ENCODE measurements at regions of chr11 and their contacts with region 1.

Region 1: GRCh38 chr11:64846998-64847666 is 2.7 kb upstream of the CDC42BPG start:
- DNase-seq: peak; percentile 79 to 97 (median 92)
- ATAC-seq: peak; percentile 60
- H3K4me3 ChIP-seq: no peak overlapping the region
- H3K4me3 Mint-ChIP-seq: no peak overlapping the region
- H3K27ac ChIP-seq: peak overlapping the region in 1 of 2 experiments; percentile 54
- H3K27ac Mint-ChIP-seq: peak overlapping the region; percentile 32
- H3K4me1 ChIP-seq: peaks cover 63% of the 10 kb centered on the region
- H3K4me1 Mint-ChIP-seq: peaks cover 60% of the 10 kb centered on the region
- H3K27me3 ChIP-seq: no peaks in the 10 kb centered on the region
- H3K27me3 Mint-ChIP-seq: no peaks in the 10 kb centered on the region
- CTCF ChIP-seq: peak; percentile 98

Region 2: GRCh38 chr11:64787526-64788320 is 59.4 kb before region 1 on chr11:
- CTCF ChIA-PET with region 1: interaction called, 6 read pairs
- POLR2A ChIA-PET with region 1: no interaction called
- intact Hi-C with region 1: loop called (anchors 2 to 5 kb)
- DNase-seq: peak in 7 of 9 experiments; percentile 42 to 75 (median 70)
- ATAC-seq: peak; percentile 84
- H3K4me3 ChIP-seq: no peak overlapping the region
- H3K4me3 Mint-ChIP-seq: no peak overlapping the region
- H3K27ac ChIP-seq: no peak overlapping the region
- H3K27ac Mint-ChIP-seq: peak overlapping the region; percentile 13
- H3K4me1 ChIP-seq: no peaks in the 10 kb centered on the region
- H3K4me1 Mint-ChIP-seq: peaks cover 8% of the 10 kb centered on the region
- H3K27me3 ChIP-seq: no peaks in the 10 kb centered on the region
- H3K27me3 Mint-ChIP-seq: no peaks in the 10 kb centered on the region
- CTCF ChIP-seq: peak; percentile 77

Region 3: DNA sequence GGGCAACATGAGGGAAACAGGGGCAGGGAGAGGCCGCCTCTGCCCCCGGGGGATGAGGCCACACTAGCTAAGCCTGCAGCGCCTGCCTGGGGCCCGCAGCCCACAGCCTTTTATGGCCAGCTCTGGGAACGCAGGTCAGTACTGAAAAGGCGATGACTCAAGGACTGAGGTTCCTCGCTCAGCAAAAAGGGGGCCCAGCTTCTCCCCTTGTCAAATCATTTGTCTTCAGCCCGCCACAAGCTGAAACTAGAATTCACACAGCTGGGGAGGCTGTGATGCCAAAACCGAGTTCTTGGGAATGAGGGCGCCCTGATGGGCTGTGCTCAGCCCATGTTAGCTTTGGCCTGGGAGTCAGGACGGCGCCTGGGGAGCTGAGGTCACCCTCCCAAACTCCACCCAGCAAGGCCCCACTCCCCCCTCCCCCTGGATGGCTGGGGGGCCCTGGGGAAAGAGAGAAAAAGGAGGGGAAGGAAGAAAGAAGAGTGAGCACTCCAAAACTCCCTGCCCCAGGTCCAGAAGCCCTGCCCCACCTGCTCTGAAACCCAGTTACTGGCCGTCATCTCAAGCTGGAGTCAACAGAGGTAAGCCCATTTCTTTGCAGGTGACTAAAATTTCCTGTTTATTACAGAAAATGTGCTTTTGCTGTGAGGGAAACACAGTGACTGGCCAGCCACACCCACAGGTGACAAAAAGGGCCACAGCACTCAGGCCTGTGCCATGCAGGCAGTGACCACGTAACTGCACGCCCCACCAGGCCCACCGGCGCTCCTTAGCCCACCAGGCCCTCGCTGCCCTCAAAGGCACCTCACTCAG is 17.5 kb after region 1 on chr11:
- CTCF ChIA-PET with region 1: interaction called, 397 read pairs
- POLR2A ChIA-PET with region 1: interaction called, 178 read pairs
- intact Hi-C with region 1: loop called in 1 of 2 experiments (anchors 1 kb)
- DNase-seq: peak in 4 of 9 experiments; percentile 19 to 61 (median 48)
- ATAC-seq: peak; percentile 10
- H3K4me3 ChIP-seq: peak overlapping the region; percentile 36 to 41
- H3K4me3 Mint-ChIP-seq: peak overlapping the region; percentile 71
- H3K27ac ChIP-seq: peak overlapping the region; percentile 57 to 87
- H3K27ac Mint-ChIP-seq: peak overlapping the region; percentile 95
- H3K4me1 ChIP-seq: peaks cover 96% of the 10 kb centered on the region
- H3K4me1 Mint-ChIP-seq: peaks cover 88% of the 10 kb centered on the region
- H3K27me3 ChIP-seq: no peaks in the 10 kb centered on the region
- H3K27me3 Mint-ChIP-seq: no peaks in the 10 kb centered on the region
- CTCF ChIP-seq: no peak

Region 4: DNA sequence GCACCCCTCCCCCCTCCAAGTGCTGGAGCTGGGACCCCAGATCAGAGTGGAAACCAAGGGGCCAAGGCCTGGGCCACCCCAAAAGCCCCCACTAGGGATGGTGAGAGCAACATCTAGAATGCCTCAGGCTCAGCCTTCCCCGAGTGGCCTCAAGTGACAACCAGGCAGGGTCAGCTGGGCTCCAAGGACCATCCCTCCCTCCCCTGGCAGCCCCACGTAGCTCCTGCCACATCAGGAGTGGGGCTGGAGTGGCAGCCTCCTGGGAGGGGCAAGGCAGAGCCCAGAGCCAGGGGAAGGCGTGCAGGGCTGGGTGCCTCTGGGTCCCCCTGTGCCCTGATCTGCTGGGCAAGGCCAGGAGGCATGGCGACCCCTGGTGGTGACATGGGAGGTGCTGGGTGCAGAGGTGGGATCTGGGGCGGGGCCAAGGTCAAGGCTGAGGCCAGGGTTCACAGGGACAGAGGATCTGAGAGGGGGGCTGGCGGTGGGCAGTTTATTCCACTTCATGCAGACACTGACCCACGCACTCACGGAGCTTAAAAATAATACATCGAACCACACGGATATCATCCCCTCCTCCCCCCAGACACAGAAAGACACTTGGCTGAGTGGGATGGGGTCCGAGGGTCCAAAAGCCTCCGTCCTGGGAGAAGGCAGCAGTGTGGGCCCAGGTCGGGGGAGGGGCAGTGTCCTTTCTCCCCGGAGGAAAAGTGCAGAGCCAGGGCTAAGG is 47.1 kb after region 1 on chr11:
- CTCF ChIA-PET with region 1: interaction called, 1,398 read pairs
- POLR2A ChIA-PET with region 1: interaction called, 810 read pairs
- intact Hi-C with region 1: loop called (anchors 1 kb)
- DNase-seq: peak; percentile 85 to 97 (median 92)
- ATAC-seq: peak; percentile 86
- H3K4me3 ChIP-seq: no peak overlapping the region
- H3K4me3 Mint-ChIP-seq: no peak overlapping the region
- H3K27ac ChIP-seq: no peak overlapping the region
- H3K27ac Mint-ChIP-seq: no peak overlapping the region
- H3K4me1 ChIP-seq: peaks cover 4% of the 10 kb centered on the region
- H3K4me1 Mint-ChIP-seq: peaks cover 2% of the 10 kb centered on the region
- H3K27me3 ChIP-seq: no peaks in the 10 kb centered on the region
- H3K27me3 Mint-ChIP-seq: no peaks in the 10 kb centered on the region
- CTCF ChIP-seq: peak; percentile 69

Region 5: DNA sequence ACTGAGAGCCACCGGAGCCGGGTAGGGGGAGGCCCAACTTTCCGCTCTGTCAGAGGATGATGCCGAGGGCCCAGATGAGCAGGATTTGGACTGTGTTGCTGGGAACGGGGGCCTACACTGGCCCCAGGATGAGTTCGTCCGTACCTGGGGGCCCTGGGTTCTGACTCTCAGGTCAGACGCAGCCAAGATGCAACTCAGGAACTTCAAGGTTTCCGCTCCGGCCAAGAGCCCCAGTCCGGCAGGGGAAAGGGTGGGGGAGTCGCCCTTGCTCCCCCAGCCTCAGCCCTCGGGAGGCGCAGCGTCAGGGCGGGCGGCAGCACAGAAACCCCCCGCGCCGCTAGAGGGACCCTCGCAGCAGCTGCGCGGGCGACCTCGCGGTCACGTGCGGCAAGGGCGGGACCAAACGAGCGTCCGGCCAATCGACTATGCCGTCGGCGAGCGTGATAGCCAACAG is 166.6 kb after region 1 on chr11:
- CTCF ChIA-PET with region 1: interaction called, 7 read pairs
- POLR2A ChIA-PET with region 1: no interaction called
- intact Hi-C with region 1: loop called (anchors 1 to 5 kb)
- DNase-seq: peak; percentile 74 to 95 (median 89)
- ATAC-seq: peak; percentile 91
- H3K4me3 ChIP-seq: peak overlapping the region; percentile 73 to 94
- H3K4me3 Mint-ChIP-seq: peak overlapping the region; percentile 88
- H3K27ac ChIP-seq: peak overlapping the region; percentile 87 to 100
- H3K27ac Mint-ChIP-seq: peak overlapping the region; percentile 96
- H3K4me1 ChIP-seq: peaks cover 24% of the 10 kb centered on the region
- H3K4me1 Mint-ChIP-seq: peaks cover 24% of the 10 kb centered on the region
- H3K27me3 ChIP-seq: no peaks in the 10 kb centered on the region
- H3K27me3 Mint-ChIP-seq: no peaks in the 10 kb centered on the region
- CTCF ChIP-seq: peak; percentile 58

Region 6: DNA sequence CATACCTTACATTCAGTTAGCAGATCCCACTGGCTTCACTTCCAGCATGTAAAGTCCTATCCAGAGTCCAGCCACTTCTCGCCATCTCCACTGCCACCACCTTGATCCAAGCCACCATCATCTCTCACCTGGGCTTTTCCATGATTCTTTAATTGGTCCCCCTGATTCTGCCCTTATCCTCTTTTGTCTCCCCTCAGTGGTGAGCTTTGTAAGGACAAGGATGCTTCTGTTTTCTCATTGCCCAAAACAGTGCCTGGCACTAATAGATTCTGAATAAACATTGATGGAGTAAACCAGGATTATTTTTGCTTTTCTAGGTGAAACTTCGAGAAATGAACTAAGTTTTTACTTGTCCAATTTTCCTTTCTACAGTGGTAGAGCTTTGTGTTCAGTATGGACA is 419.1 kb after region 1 on chr11:
- CTCF ChIA-PET with region 1: no interaction called
- POLR2A ChIA-PET with region 1: no interaction called
- intact Hi-C with region 1: no loop called
- DNase-seq: peak in 1 of 9 experiments; percentile 11
- ATAC-seq: no peak
- H3K4me3 ChIP-seq: no peak overlapping the region
- H3K4me3 Mint-ChIP-seq: no peak overlapping the region
- H3K27ac ChIP-seq: no peak overlapping the region
- H3K27ac Mint-ChIP-seq: no peak overlapping the region
- H3K4me1 ChIP-seq: peaks cover 9% of the 10 kb centered on the region
- H3K4me1 Mint-ChIP-seq: peaks cover 28% of the 10 kb centered on the region
- H3K27me3 ChIP-seq: no peaks in the 10 kb centered on the region
- H3K27me3 Mint-ChIP-seq: no peaks in the 10 kb centered on the region
- CTCF ChIP-seq: no peak

Region 7: DNA sequence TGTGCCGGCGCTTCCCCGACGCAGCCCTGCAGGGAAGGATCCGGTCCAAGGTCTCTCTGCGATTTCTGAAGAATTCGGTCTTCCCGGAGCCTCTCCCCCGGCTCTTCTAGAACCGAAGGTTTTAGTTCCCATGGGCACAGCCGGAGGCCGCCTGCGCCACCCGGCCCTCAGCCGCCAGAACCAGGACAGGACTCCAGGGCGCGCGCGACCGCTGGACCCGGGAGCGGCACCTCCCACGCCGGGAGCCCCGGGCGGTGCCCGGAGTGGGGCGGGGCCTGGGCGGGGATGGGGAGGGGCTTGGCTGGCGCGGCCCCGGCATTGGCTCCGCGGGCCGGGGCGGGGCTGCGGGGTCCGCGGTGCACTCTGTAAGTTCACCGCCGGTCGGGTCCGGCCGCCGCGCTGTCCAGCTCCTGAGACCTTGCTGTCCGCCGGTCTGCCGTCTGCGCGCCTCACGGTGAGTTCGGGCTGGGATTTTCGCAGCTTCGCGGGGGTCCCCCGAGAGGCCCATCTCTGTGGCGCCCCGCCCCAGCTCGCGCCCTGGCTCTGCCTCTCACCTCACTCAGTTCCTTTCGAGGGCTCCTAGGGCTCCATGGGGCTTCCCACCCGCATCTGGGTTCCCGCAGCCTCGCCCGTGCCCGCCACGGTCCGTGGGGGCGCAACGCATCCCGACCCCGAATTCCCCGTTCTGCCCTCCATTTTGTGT is 467.5 kb after region 1 on chr11 and contains the start of gene CDC42EP2:
- CTCF ChIA-PET with region 1: no interaction called
- POLR2A ChIA-PET with region 1: no interaction called
- intact Hi-C with region 1: loop called in 1 of 2 experiments (anchors 10 kb)
- DNase-seq: peak; percentile 45 to 83 (median 72)
- ATAC-seq: peak; percentile 90
- H3K4me3 ChIP-seq: peak within 1 kb of the TSS; percentile 73 to 81
- H3K4me3 Mint-ChIP-seq: peak within 1 kb of the TSS; percentile 80
- H3K27ac ChIP-seq: no peak within 1 kb of the TSS
- H3K27ac Mint-ChIP-seq: no peak within 1 kb of the TSS
- H3K4me1 ChIP-seq: peaks cover 15% of the 10 kb centered on the region
- H3K4me1 Mint-ChIP-seq: peaks cover 7% of the 10 kb centered on the region
- H3K27me3 ChIP-seq: peaks cover 0 to 5% of the 10 kb centered on the region in 2 experiments
- H3K27me3 Mint-ChIP-seq: no peaks in the 10 kb centered on the region
- CTCF ChIP-seq: no peak
- total RNA-seq, gene CDC42EP2: 0.67 to 0.76 TPM